ENCODE measurements at regions of chr17 and their contacts with region 1.

Region 1: GRCh38 chr17:81512560-81513371 is at the start of gene ACTG1:
- DNase-seq: peak; percentile 91
- ATAC-seq: peak; percentile 57
- H3K4me3 Mint-ChIP-seq: peak within 1 kb of the TSS; percentile 97
- H3K27ac Mint-ChIP-seq: peak within 1 kb of the TSS; percentile 92
- H3K4me1 Mint-ChIP-seq: peaks cover 27% of the 10 kb centered on the region
- H3K27me3 Mint-ChIP-seq: no peaks in the 10 kb centered on the region
- CTCF ChIP-seq: no peak
- total RNA-seq, gene ACTG1: 4,606 to 4,756 TPM

Region 2: DNA sequence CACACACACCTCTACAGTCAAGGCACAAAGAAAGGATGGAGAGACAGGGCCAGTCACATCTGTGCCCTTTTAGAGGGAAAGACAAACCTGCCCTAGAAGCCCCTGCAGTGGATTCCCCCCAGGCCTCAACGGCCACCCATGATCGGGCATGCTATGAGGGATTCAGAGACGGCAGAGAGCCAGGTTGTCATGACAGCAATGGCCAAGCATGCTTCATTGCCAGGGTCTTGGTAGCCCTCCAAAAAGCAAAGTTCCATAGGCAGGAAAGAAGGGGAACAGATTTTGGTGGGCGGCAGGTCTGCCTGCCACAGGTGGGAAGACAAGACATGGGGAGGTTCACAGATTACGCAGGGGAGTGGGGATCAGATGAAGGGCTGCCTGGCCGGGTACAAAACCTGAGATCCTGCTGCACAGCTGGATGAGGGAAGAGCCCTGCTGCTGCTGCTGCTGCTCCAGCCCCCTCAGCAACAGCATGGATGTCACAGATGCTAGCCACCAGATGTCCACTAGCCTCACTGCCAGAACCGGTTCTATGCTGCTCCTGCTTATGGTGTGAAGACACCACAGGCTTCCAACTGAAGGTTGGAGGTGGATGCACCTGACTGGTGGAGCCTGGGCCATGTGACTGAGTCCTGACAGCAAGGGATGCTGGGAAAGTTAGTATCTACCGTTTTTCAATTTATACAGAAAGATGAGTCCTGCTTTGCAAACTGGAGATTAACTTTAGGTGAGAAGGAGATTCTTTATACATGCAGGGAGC is 18.0 kb before region 1 on chr17:
- CTCF ChIA-PET with region 1: no interaction called
- POLR2A ChIA-PET with region 1: interaction called, 33 read pairs
- intact Hi-C with region 1: no loop called
- DNase-seq: no peak
- ATAC-seq: peak; percentile 69
- H3K4me3 Mint-ChIP-seq: no peak overlapping the region
- H3K27ac Mint-ChIP-seq: no peak overlapping the region
- H3K4me1 Mint-ChIP-seq: peaks cover 3% of the 10 kb centered on the region
- H3K27me3 Mint-ChIP-seq: peaks cover 2% of the 10 kb centered on the region
- CTCF ChIP-seq: no peak

Region 3: DNA sequence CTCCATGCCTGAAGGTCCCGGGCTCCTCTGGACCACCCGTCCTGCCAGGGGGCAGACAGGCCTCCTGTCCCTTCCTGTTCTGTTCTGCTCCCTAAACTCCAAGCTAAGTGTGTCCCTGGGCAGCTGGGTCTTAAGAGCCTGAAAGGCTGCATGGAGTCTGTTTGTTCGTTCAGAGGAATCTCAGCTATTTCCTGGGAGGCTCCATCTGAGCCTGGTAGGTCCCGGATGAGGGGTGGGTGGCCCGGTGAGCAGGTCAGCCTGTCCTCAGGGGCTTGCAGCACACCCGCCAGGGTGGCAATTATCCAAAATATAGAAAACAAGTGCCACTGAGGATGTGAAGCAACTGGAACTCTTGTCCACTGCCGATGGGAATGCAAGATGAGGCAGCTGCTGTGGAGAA is 12.7 kb before region 1 on chr17:
- CTCF ChIA-PET with region 1: no interaction called
- POLR2A ChIA-PET with region 1: interaction called, 18 read pairs
- intact Hi-C with region 1: no loop called
- DNase-seq: no peak
- ATAC-seq: no peak
- H3K4me3 Mint-ChIP-seq: no peak overlapping the region
- H3K27ac Mint-ChIP-seq: no peak overlapping the region
- H3K4me1 Mint-ChIP-seq: no peaks in the 10 kb centered on the region
- H3K27me3 Mint-ChIP-seq: no peaks in the 10 kb centered on the region
- CTCF ChIP-seq: no peak

Region 4: DNA sequence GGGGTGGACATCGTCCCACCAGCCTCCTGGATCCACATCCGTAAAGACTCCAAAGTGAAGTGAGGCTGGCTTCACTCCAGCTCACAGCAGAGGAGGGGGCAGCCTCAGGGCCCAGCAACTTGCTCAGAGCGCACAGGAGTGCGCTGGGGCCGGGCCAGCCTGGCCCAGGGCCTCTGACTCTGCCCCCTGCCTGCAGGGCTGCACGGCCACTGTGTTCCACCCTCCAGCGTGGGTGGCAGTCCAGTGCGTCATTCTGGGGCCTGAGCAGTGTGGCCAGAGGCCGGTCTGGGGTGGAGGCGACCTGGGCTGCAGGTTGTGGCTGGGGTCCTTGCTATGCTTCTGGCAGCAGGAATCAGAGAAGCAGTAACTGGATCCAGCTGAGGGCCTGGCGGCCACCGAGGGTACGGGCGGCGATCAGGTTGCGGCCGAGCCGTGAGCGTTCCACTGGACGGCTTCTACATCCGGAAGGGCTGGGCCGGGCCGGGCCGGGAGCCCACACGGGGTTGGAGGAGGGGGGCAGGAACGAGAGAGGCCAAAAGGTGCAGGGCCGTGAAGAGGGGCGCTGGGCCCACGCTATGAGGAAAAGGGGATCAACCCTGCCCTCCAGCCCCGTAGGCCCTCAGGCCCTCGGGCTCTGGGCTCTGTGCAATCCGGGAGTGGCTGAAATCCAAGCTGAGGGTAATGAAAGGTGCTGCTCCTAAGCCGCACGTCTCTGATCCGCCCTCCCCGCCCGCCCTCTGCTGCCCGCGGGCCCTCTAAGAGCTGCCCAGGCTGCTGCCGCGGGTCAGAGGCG is 15.0 kb after region 1 on chr17 and contains the start of gene FSCN2:
- CTCF ChIA-PET with region 1: no interaction called
- POLR2A ChIA-PET with region 1: no interaction called
- intact Hi-C with region 1: no loop called
- DNase-seq: no peak
- ATAC-seq: no peak
- H3K4me3 Mint-ChIP-seq: no peak within 1 kb of the TSS
- H3K27ac Mint-ChIP-seq: no peak within 1 kb of the TSS
- H3K4me1 Mint-ChIP-seq: no peaks in the 10 kb centered on the region
- H3K27me3 Mint-ChIP-seq: peaks cover 5% of the 10 kb centered on the region
- CTCF ChIP-seq: no peak
- total RNA-seq, gene FSCN2: 0.32 TPM in 1 of 2 experiments, not detected in the other

Region 5: GRCh38 chr17:81553018-81553615 is 40.4 kb after region 1 on chr17:
- CTCF ChIA-PET with region 1: no interaction called
- POLR2A ChIA-PET with region 1: interaction called, 22 read pairs
- intact Hi-C with region 1: no loop called
- DNase-seq: peak; percentile 97
- ATAC-seq: peak; percentile 74
- H3K4me3 Mint-ChIP-seq: peak overlapping the region; percentile 92
- H3K27ac Mint-ChIP-seq: peak overlapping the region; percentile 92
- H3K4me1 Mint-ChIP-seq: peaks cover 38% of the 10 kb centered on the region
- H3K27me3 Mint-ChIP-seq: no peaks in the 10 kb centered on the region
- CTCF ChIP-seq: no peak

Measured in activated CD8-positive, alpha-beta T cell treated with anti-CD3 and anti-CD28 coated beads for 36 hours (primary cell).